ENCODE measurements at regions of chr16 and their contacts with region 1.

Region 1: GRCh38 chr16:79393127-79393526 is 207.4 kb downstream of the MAF start:
- DNase-seq: no peak
- H3K4me3 ChIP-seq: no peak overlapping the region
- H3K27ac ChIP-seq: no peak overlapping the region
- H3K4me1 ChIP-seq: no peaks in the 10 kb centered on the region
- H3K27me3 ChIP-seq: no peaks in the 10 kb centered on the region
- CTCF ChIP-seq: no peak

Region 2: GRCh38 chr16:79247386-79247785 is 145.7 kb before region 1 on chr16:
- CTCF ChIA-PET with region 1: no interaction called
- POLR2A ChIA-PET with region 1: no interaction called
- intact Hi-C with region 1: no loop called
- DNase-seq: no peak
- H3K4me3 ChIP-seq: no peak overlapping the region
- H3K27ac ChIP-seq: no peak overlapping the region
- H3K4me1 ChIP-seq: no peaks in the 10 kb centered on the region
- H3K27me3 ChIP-seq: no peaks in the 10 kb centered on the region
- CTCF ChIP-seq: no peak

Region 3: DNA sequence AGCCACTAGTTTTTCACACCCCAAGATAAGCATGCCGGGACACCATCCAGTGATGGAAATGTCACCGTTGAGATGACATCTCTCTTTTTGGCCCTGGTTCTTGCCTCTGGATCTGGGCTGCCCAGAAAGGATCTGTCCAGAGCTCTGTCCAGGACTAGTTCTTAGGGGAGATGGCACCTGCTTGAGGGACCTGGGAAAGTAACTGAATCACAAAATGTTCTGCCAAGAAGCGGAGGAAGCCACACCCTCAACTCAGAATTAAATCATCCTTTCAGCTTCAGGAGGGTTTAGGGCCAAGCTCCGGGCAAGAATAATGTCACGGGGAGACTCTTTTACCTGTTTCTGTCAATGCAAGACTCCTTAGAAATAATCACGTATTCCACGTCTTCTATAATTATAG is 41.2 kb before region 1 on chr16:
- CTCF ChIA-PET with region 1: no interaction called
- POLR2A ChIA-PET with region 1: no interaction called
- intact Hi-C with region 1: loop called (anchors 5 kb)
- DNase-seq: no peak
- H3K4me3 ChIP-seq: no peak overlapping the region
- H3K27ac ChIP-seq: no peak overlapping the region
- H3K4me1 ChIP-seq: no peaks in the 10 kb centered on the region
- H3K27me3 ChIP-seq: peaks cover 9% of the 10 kb centered on the region
- CTCF ChIP-seq: no peak

Region 4: DNA sequence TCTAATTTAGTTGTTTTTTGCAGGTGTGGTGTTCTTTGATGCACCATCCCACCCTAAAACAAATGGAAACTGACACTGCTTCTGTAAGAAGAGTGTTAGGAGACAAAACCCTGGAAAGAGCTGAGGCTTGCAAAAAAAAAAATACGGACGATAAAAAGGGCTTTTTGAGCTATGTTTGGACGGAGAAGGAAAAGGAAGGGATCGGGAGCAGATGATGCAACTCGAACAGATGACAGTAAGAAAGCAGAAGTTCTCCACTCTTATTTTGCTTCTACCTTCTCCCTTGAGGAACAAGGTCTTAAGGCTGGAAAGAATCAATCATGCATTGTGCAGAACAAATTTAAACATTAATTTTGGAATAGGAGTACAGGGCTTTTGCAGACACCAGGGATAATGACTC is 70.7 kb after region 1 on chr16:
- CTCF ChIA-PET with region 1: no interaction called
- POLR2A ChIA-PET with region 1: no interaction called
- intact Hi-C with region 1: no loop called
- DNase-seq: no peak
- H3K4me3 ChIP-seq: no peak overlapping the region
- H3K27ac ChIP-seq: no peak overlapping the region
- H3K4me1 ChIP-seq: no peaks in the 10 kb centered on the region
- H3K27me3 ChIP-seq: no peaks in the 10 kb centered on the region
- CTCF ChIP-seq: no peak

Region 5: GRCh38 chr16:79640513-79641355 is 247.6 kb after region 1 on chr16:
- CTCF ChIA-PET with region 1: no interaction called
- POLR2A ChIA-PET with region 1: no interaction called
- intact Hi-C with region 1: no loop called
- DNase-seq: no peak
- H3K4me3 ChIP-seq: no peak overlapping the region
- H3K27ac ChIP-seq: no peak overlapping the region
- H3K4me1 ChIP-seq: no peaks in the 10 kb centered on the region
- H3K27me3 ChIP-seq: no peaks in the 10 kb centered on the region
- CTCF ChIP-seq: no peak

Measured in A673 (cell line).